Caco-2 (cell line): ENCODE measurements at regions of chr19 and their contacts with region 1.

Region 1: DNA sequence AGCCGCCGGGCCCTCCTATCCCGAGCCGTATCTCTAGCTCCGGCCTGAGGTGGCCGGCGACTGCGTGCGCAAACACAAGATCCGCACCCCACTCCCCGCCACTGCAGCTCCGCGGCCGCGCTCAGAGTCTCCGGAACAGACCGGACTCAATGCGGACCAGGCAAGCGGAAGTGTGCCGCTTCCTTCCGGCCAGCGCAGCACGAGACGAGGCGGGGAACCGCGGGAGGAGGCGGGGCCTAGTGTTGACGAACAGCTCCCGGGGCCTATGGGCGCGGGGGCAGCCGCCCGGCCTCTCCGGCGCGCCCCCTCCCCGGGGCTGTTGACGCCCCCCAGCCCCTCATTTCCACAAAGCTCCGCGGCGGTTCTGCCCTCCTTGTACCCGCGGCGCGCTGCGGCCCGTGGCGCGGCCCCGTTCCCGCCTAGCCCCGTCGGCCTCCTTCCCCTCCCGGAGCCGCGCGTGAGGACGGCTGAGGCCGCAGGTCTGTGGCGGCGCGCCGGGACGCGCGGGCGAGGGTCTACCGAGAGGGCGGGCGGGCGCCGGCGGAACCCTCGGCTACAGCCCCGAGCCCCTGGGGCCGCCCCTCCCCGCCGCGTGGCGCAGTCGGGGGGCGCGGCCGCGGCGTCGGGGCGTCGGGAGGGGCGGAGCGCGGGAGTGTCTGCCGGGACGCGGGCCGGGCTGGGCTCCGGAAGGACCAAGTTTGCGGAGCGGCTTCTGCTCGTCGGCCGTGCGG is at the start of gene DPY19L3:
- DNase-seq: peak; percentile 94 to 98
- H3K4me3 ChIP-seq: peak within 1 kb of the TSS; percentile 99
- H3K4me3 Mint-ChIP-seq: peak within 1 kb of the TSS; percentile 77
- H3K27ac Mint-ChIP-seq: peak within 1 kb of the TSS; percentile 79
- H3K4me1 ChIP-seq: peaks cover 5% of the 10 kb centered on the region
- H3K4me1 Mint-ChIP-seq: peaks cover 15% of the 10 kb centered on the region
- H3K27me3 ChIP-seq: no peaks in the 10 kb centered on the region
- H3K27me3 Mint-ChIP-seq: no peaks in the 10 kb centered on the region
- CTCF ChIP-seq: no peak
- total RNA-seq, gene DPY19L3: 40.7 and 41.5 TPM in 2 replicates

Region 2: GRCh38 chr19:32345261-32346207 is 60.1 kb before region 1 on chr19 and contains the start of gene ZNF507:
- CTCF ChIA-PET with region 1: no interaction called
- POLR2A ChIA-PET with region 1: interaction called, 10 read pairs
- intact Hi-C with region 1: loop called (anchors 2 kb)
- DNase-seq: peak; percentile 88 to 93
- H3K4me3 ChIP-seq: peak within 1 kb of the TSS; percentile 84
- H3K4me3 Mint-ChIP-seq: peak within 1 kb of the TSS; percentile 95
- H3K27ac Mint-ChIP-seq: peak within 1 kb of the TSS; percentile 98
- H3K4me1 ChIP-seq: peaks cover 18% of the 10 kb centered on the region
- H3K4me1 Mint-ChIP-seq: peaks cover 20% of the 10 kb centered on the region
- H3K27me3 ChIP-seq: no peaks in the 10 kb centered on the region
- H3K27me3 Mint-ChIP-seq: no peaks in the 10 kb centered on the region
- CTCF ChIP-seq: no peak
- total RNA-seq, gene ZNF507: 26.6 and 27.4 TPM in 2 replicates

Region 3: DNA sequence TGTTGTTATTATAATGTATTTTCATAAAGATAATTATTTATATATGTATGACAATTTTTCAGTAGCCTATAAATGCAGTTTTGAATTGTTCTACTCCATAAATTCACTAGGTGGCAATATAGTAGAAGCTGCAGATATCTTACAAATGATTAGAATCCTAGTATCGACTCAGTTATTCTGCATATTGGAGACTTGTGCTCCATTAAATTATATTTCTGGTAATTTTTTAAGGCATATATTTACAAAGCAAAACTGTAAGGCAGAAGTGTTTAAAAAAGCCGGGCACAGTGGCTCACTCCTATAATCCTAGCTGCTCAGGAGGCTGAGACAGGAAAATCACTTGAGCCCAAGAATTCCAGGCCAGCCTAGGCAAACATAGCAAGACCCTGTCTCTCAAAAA is 58.7 kb after region 1 on chr19:
- CTCF ChIA-PET with region 1: no interaction called
- POLR2A ChIA-PET with region 1: no interaction called
- intact Hi-C with region 1: loop called (anchors 2 kb)
- DNase-seq: no peak
- H3K4me3 ChIP-seq: no peak overlapping the region
- H3K4me3 Mint-ChIP-seq: no peak overlapping the region
- H3K27ac Mint-ChIP-seq: no peak overlapping the region
- H3K4me1 ChIP-seq: no peaks in the 10 kb centered on the region
- H3K4me1 Mint-ChIP-seq: no peaks in the 10 kb centered on the region
- H3K27me3 ChIP-seq: no peaks in the 10 kb centered on the region
- H3K27me3 Mint-ChIP-seq: no peaks in the 10 kb centered on the region
- CTCF ChIP-seq: peak; percentile 26 to 27

Region 4: GRCh38 chr19:32674959-32675719 is 269.5 kb after region 1 on chr19 and contains the start of gene ANKRD27:
- CTCF ChIA-PET with region 1: no interaction called
- POLR2A ChIA-PET with region 1: no interaction called
- intact Hi-C with region 1: loop called (anchors 10 kb)
- DNase-seq: peak; percentile 98 to 99
- H3K4me3 ChIP-seq: peak within 1 kb of the TSS; percentile 90
- H3K4me3 Mint-ChIP-seq: peak within 1 kb of the TSS; percentile 90
- H3K27ac Mint-ChIP-seq: peak within 1 kb of the TSS; percentile 75
- H3K4me1 ChIP-seq: peaks cover 15% of the 10 kb centered on the region
- H3K4me1 Mint-ChIP-seq: peaks cover 32% of the 10 kb centered on the region
- H3K27me3 ChIP-seq: no peaks in the 10 kb centered on the region
- H3K27me3 Mint-ChIP-seq: no peaks in the 10 kb centered on the region
- CTCF ChIP-seq: no peak
- total RNA-seq, gene ANKRD27: 53.9 and 54.3 TPM in 2 replicates